Right ventricle myocardium inferior (tissue), 1 donor: ENCODE measurements at regions of chr12 and their contacts with region 1.

Region 1: GRCh38 chr12:101939856-101940265 is 62.5 kb downstream of the DRAM1 start:
- DNase-seq: no peak
- ATAC-seq: peak; percentile 47

Region 2: GRCh38 chr12:102484428-102484958 is 544.6 kb after region 1 on chr12:
- intact Hi-C with region 1: loop called (anchors 5 kb)
- DNase-seq: no peak
- ATAC-seq: peak; percentile 51

Region 3: DNA sequence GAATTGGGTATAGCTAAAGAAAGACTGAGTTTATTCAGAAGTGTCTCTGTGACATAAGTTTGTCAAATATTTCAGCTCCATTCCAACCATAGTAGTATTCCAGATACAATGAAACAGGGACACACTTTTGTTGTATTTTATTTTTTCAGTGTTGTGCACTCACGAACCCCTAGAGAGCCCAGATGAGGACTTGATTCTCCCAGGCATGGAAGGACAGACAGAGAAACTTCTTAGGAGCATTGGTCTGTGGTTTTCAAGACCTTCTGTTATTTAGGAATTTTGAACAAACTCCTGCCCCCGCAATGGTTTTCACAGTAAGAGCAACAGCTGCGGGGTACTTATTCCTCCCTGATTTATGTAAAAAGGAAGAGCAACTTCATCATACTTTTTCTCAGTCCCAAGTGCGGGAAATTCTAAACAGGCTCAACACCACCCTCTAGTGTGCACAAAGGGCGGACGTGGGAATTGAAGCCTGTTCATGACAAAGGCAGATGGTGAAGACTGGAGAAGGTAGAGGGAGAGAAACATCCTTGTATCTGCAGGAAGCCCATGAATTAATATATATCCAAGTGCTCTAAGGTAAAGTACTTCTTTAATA is 829.6 kb after region 1 on chr12:
- intact Hi-C with region 1: loop called (anchors 5 kb)
- DNase-seq: no peak
- ATAC-seq: peak; percentile 70

Region 4: DNA sequence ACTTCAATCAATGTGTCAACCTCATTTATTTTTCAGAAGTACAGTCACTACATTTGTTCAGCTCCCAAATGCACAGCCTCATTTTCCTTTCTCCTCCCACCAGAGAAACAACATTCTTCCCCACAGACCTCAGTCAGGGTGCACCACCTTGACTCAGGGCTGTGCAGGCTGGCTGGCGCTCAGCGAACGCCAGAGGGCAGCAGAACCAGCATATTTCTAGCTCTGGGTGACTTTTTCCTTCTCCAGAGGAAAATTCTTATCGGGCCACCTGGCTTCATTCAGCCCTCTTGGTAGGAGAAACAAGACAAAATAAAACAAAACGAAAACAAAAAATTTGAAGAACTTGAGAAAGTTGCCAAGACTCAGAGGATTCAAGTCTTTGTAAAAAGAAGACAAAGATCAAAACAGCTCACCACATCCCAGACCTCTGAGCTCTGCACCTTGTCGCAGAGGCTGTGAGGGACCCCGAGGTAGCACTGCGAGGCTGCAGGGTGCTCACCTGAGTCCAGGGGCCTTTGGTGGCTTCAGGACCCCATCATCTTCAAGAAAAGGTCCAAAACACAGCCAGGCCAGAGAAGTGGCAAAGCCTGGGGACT is 943.4 kb after region 1 on chr12:
- intact Hi-C with region 1: loop called (anchors 5 kb)
- DNase-seq: no peak
- ATAC-seq: no peak

Region 5: DNA sequence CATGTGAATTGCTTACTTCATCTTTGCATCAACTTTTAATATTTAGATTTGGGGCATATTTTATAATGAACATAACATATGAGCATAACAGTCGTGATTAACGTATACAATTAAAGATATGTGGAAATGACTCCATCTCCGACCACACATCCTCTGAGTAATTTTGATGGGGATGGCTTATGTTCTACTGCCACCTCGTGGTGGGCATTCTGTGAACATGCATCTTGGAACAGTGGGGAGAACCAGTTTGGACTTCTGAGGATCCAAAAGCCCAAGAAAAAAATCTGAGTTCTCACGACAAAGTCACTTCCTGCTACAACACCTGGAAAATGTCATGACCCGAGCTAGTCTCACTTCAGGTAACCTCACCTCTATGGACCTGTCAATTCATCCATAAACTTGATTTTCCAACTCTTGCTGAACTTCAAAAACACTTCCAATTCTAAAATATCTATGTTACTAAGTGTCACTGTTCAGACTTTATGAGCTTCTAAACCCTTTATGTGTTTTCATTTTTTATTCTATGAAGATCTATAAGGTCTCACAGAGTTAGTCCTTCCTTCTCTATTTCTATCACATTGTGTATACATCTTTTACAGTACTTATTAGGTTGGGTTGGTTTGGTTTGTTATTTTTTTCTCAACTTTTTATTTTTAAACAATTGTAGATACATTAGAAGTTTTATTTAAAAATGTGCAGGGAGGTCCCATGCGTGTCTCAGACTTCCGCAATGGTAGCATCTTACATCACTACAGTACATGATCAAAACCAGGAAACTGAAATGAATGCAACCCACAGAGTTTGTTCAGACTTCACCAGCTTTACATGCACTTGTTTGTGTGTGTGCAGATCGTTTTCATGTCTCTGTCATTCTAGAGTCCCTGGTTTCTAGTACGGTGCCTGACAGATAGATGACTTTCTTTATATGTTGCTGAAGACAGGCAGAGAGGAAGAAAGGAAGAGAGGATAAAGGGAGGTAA is 1609.1 kb after region 1 on chr12:
- intact Hi-C with region 1: loop called (anchors 5 kb)
- DNase-seq: no peak
- ATAC-seq: peak; percentile 31